Dorsolateral prefrontal cortex (tissue), 120 donors: ENCODE measurements at regions of chr1 and their contacts with region 1.

Region 1: GRCh38 chr1:175493321-175494010 is 249.9 kb downstream of the TNR start:
- DNase-seq: peak in 6 of 10 donors; percentile 27 to 66 (median 56)
- H3K4me3 ChIP-seq: no peak overlapping the region
- H3K27ac ChIP-seq: peak overlapping the region in 52 of 59 donors; percentile 26 to 85 (median 67)
- H3K27me3 ChIP-seq: peaks cover 0 to 36% (median 0%) of the 10 kb centered on the region in 45 donors
- CTCF ChIP-seq: no peak

Region 2: DNA sequence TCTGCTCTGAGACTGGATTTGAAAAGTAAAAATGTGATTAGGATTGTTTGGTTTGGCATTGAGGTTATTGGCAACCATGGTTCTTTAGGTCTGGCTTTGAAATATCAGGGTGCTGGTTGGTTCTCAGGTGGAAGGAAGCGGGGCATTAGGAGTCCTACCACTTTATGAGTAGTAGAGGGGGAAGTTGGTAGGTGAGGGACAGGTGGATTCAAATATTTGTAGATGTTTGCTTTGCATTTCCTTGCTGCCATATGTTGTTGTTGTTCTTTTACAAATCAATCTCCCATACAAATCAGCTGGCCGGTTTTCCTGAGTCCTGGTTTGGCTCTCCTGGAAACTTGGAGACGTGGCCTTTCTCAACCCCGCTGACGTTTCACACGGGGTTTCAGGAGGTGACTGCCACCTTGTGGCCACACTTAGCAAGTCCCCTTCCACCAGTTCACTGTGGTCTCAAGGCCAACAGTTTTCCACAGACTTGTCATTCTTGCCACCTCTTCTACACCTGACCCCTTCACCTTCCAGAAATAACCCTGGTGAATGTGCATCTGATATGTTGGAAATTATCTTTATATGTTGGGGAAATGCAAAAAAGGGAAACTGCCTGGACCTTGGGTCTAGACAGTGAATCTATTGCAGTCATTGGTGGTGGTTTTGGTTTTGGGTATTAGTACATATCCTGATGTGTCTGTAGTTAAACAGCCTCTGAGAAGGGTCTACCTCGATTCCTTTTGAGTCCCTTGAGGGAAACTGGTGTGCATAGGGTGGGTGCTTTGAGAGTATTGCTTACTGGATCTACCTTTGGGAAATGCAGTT is 173.8 kb before region 1 on chr1:
- intact Hi-C with region 1: no loop called
- DNase-seq: peak in 9 of 10 donors; percentile 33 to 74 (median 63)
- H3K4me3 ChIP-seq: no peak overlapping the region
- H3K27ac ChIP-seq: peak overlapping the region in 1 of 59 donors; percentile 30
- H3K27me3 ChIP-seq: peaks cover 0 to 4% (median 0%) of the 10 kb centered on the region in 45 donors
- CTCF ChIP-seq: peak; percentile 65 to 93 (median 85)

Region 3: GRCh38 chr1:175449306-175449705 is 44.2 kb before region 1 on chr1:
- intact Hi-C with region 1: no loop called
- DNase-seq: no peak
- H3K4me3 ChIP-seq: no peak overlapping the region
- H3K27ac ChIP-seq: no peak overlapping the region
- H3K27me3 ChIP-seq: no peaks in the 10 kb centered on the region
- CTCF ChIP-seq: no peak

Region 4: GRCh38 chr1:175734642-175735041 is 241.2 kb after region 1 on chr1:
- intact Hi-C with region 1: loop called in 1 of 2 experiments (anchors 5 kb)
- DNase-seq: peak in 1 of 10 donors; percentile 53
- H3K4me3 ChIP-seq: no peak overlapping the region
- H3K27ac ChIP-seq: peak overlapping the region in 1 of 59 donors; percentile 20
- H3K27me3 ChIP-seq: peaks cover 0 to 36% (median 0%) of the 10 kb centered on the region in 45 donors
- CTCF ChIP-seq: no peak